Activated naive CD8-positive, alpha-beta T cell treated with anti-CD3 and anti-CD28 coated beads, Interleukin-2, amount 10 ng/mL, durations not matched to agents 7 days and 5 days (primary cell): ENCODE measurements at regions of chr7 and their contacts with region 1.

Region 1: DNA sequence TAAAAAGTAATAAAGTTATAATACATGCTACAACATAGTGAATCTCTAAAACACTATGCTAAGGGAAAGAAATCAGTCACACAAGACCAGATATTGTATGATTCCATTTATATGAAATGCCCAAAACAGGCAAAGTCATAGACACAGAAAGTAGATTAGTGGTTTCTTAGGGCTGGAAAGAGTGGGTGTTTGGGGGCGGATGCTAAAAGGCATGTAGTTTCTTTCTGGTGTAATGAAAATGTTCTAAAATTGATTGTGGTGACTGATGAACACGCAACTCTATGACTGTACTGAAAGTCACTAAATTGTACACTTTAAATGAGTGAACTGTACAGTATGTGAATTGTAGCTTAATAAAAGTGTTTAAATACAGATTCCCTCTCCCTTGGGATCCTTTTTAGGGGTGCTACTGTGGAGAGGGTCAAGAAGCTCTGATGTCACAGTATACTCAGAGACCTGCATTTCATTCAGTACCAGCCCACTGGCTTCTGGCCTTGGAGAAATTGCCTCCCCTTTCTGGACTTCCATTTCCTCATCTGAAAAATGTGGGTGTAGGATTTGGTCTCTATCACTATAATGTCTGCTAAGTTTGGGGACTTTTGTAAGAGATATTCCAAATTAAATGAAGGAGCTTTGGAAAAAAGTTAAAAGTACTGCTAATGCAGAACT is 46.4 kb downstream of the AOAH start:
- DNase-seq: no peak
- ATAC-seq: peak; percentile 46
- H3K4me3 Mint-ChIP-seq: peak overlapping the region; percentile 67
- H3K27ac Mint-ChIP-seq: peak overlapping the region; percentile 89
- H3K4me1 Mint-ChIP-seq: peaks cover 39% of the 10 kb centered on the region
- H3K27me3 Mint-ChIP-seq: no peaks in the 10 kb centered on the region

Region 2: DNA sequence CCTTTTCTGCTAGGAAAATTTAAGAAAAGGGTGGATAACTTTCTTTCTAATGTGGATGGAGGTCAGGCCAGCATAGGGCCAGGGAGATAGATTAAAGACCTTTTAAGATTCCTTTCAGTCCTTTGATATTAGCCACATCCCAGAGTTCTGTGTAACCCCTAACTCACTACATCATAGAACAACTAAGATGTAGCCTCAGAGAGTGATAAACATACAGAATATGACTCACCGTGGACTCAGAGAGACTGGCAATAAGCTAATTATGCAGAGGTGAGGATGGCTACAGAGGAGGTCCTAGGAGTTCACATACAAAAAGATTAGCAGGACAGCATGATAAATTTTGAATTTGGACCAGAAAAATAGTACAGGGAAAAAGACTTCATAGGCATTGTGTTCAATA is 94.6 kb before region 1 on chr7:
- POLR2A ChIA-PET with region 1: no interaction called
- DNase-seq: no peak
- ATAC-seq: no peak
- H3K4me3 Mint-ChIP-seq: no peak overlapping the region
- H3K27ac Mint-ChIP-seq: no peak overlapping the region
- H3K4me1 Mint-ChIP-seq: peaks cover 2% of the 10 kb centered on the region
- H3K27me3 Mint-ChIP-seq: no peaks in the 10 kb centered on the region

Region 3: DNA sequence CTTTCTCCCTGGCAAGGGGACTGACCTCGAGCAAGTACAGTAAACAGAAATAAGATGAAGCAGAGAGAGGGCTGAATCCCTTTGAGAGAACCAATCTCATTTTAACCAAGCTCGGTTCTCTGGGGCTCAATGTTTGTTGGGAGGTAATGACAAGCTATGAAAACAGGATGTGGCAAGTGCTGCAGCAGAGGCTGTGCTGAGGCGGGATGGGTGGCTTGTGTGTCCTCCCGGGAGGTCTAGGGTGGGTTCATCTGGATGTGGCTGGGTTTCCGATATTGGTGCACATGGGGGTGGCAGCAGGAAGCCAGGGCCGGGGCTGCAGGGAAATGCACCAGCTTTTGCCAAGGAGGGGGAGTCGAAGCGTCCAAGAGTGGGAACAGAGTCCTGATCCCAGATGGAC is 38.1 kb before region 1 on chr7:
- POLR2A ChIA-PET with region 1: interaction called, 12 read pairs
- DNase-seq: peak; percentile 70
- ATAC-seq: peak; percentile 98
- H3K4me3 Mint-ChIP-seq: peak overlapping the region; percentile 73
- H3K27ac Mint-ChIP-seq: peak overlapping the region; percentile 95
- H3K4me1 Mint-ChIP-seq: peaks cover 42% of the 10 kb centered on the region
- H3K27me3 Mint-ChIP-seq: no peaks in the 10 kb centered on the region